Transverse colon (tissue), 4 donors: ENCODE measurements at regions of chr14 and their contacts with region 1.

Region 1: GRCh38 chr14:93231129-93231979 is 24.3 kb downstream of the UBR7 start:
- DNase-seq: no peak
- H3K4me3 ChIP-seq: peak overlapping the region; percentile 5 to 47 (median 26)
- H3K27ac ChIP-seq: no peak overlapping the region
- H3K4me1 ChIP-seq: peaks cover 0 to 9% (median 6%) of the 10 kb centered on the region in 4 donors
- H3K27me3 ChIP-seq: no peaks in the 10 kb centered on the region
- CTCF ChIP-seq: no peak
- EP300 ChIP-seq: no peak
- POLR2A ChIP-seq: no peak

Region 2: GRCh38 chr14:93543766-93544165 is 312.4 kb after region 1 on chr14:
- in situ Hi-C with region 1: loop called in 1 of 4 experiments (anchors 25 kb)
- intact Hi-C with region 1: no loop called
- DNase-seq: no peak
- H3K4me3 ChIP-seq: no peak overlapping the region
- H3K27ac ChIP-seq: no peak overlapping the region
- H3K4me1 ChIP-seq: no peaks in the 10 kb centered on the region
- H3K27me3 ChIP-seq: no peaks in the 10 kb centered on the region
- CTCF ChIP-seq: peak in 1 of 5 experiments; percentile 12
- EP300 ChIP-seq: no peak
- POLR2A ChIP-seq: no peak